Dorsolateral prefrontal cortex (tissue), 120 donors: ENCODE measurements at regions of chr12 and their contacts with region 1.

Region 1: DNA sequence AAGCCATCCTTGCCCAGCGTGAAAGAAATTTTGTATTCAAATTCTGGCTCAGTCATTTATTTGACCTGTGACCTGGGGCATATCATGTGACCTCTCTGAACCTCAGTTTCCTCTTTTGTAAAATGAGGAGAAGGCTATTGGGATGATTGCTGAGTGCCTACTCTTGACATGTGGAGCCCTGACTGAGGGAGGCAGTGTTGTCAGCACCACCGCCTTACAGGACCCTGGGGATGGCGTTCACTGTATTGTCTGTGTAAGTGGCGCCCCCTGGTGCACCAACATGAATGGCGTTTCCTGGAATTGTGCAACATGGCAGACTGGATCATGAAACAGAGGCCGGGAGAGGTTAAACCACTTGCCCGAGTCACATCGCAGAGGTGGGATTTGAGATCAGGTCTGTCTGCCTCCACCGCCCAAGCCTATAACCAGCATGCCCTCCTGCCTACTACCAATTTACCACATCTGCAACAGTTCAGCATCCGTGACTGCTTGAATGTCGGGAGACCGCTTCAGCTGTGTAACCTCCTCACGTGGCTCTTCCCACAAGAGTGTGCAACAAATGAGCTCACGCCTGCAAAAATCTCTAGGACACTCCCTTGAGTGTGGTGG is 20.1 kb upstream of the CCDC63 start:
- DNase-seq: peak; percentile 48 to 95 (median 86)
- H3K4me3 ChIP-seq: peak overlapping the region in 13 of 59 donors; percentile 4 to 40 (median 22)
- H3K27ac ChIP-seq: no peak overlapping the region
- H3K27me3 ChIP-seq: no peaks in the 10 kb centered on the region
- CTCF ChIP-seq: peak; percentile 58 to 95 (median 85)

Region 2: GRCh38 chr12:110449799-110450497 is 376.7 kb before region 1 on chr12 and contains the start of gene ARPC3:
- intact Hi-C with region 1: loop called (anchors 5 to 10 kb)
- DNase-seq: peak; percentile 89 to 95 (median 94)
- H3K4me3 ChIP-seq: peak within 1 kb of the TSS; percentile 60 to 97 (median 86)
- H3K27ac ChIP-seq: peak within 1 kb of the TSS; percentile 36 to 96 (median 89)
- H3K27me3 ChIP-seq: no peaks in the 10 kb centered on the region
- CTCF ChIP-seq: peak; percentile 67 to 96 (median 87)
- total RNA-seq, gene ARPC3: 78.9 to 178 (median 137) TPM

Region 3: DNA sequence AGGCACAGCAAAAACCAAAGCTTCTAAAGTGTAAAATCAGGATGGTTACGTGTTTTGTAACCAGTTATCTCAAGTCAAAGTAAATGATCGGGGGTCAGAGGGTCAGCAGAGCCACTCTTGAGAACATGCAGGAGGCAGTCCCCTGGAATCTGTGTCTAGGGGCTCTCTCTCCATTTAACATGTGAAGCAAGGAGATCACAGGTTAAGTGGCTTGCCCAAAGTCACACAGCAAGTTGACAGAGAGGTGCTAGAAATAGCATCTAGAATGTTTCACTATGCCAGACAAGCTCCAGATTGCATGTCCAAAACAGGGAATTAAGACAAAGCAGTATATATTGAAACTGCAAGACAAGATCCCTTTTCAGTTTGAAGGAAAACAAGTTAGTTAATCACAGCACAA is 277.0 kb before region 1 on chr12:
- intact Hi-C with region 1: loop called in 1 of 2 experiments (anchors 5 kb)
- DNase-seq: no peak
- H3K4me3 ChIP-seq: no peak overlapping the region
- H3K27ac ChIP-seq: peak overlapping the region in 4 of 59 donors; percentile 2 to 38 (median 27)
- H3K27me3 ChIP-seq: no peaks in the 10 kb centered on the region
- CTCF ChIP-seq: no peak

Region 4: DNA sequence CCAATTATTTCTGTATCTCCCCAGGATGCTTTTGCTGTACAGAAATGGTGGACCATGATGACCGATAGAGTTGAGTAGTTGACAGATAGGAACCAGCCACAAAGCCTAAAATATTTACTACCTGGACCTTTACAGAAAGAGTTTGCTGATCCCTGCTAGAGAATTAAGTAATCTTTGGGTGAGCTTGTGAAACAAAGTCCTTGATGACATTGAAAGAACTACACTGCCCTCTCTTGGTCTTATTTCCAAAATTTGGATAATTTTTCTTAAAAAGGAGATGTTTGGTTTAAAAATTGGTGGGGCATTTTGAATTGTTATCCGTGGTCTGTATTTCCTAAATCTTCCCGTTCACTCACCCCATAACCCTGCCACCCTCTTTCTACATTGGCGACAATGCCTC is 226.4 kb before region 1 on chr12:
- intact Hi-C with region 1: loop called (anchors 5 to 10 kb)
- DNase-seq: no peak
- H3K4me3 ChIP-seq: peak overlapping the region in 1 of 59 donors; percentile 7
- H3K27ac ChIP-seq: peak overlapping the region in 3 of 59 donors; percentile 14 to 37 (median 15)
- H3K27me3 ChIP-seq: no peaks in the 10 kb centered on the region
- CTCF ChIP-seq: peak; percentile 25 to 83 (median 62)

Region 5: DNA sequence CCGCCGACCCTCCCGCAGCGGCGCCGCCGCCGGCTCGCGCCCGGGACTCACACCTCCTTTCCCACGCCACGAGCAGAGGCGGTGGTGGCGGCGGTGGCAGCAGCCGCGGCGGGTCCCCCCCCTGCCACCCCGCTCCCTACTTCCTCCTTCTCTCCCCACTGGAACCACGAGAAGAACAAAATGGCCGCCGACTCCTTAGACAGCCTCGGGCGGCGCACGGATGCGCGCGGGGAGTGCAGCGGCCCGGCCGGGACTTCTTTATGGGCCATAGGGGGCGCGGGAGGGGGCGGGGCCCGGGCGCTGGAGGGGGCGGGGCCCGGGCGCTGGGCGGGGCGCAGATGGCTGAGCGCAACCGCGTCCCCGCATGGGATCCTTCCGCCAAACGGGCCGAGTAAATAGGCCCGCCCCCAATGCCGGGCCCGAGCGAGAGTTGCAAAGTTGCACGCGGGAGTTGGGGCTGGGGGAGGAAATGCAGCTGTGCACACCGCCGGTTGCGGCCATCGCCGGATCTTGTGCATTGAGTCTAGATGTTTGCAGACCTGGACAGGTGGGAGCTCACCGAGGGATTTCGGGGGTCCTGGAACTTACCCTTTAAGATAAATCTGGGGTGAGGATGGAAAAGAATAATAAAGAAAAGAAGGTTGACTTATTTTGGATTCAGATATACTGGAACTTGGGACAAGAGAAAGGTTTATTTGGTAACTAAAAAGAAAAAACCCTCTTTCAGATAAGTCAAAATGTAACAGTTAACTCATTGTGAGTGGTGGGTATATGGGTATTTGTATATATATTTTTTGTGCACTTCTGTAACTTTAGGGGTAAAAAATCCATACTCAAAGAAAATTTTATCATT is 83.8 kb before region 1 on chr12 and contains the start of gene PPP1CC:
- intact Hi-C with region 1: loop called (anchors 5 to 10 kb)
- DNase-seq: peak; percentile 80 to 95 (median 92)
- H3K4me3 ChIP-seq: peak within 1 kb of the TSS; percentile 73 to 99 (median 96)
- H3K27ac ChIP-seq: peak within 1 kb of the TSS; percentile 52 to 97 (median 91)
- H3K27me3 ChIP-seq: no peaks in the 10 kb centered on the region
- CTCF ChIP-seq: peak in 37 of 56 donors; percentile 7 to 45 (median 23)
- total RNA-seq, gene PPP1CC: 59.0 to 118 (median 84.9) TPM

Region 6: DNA sequence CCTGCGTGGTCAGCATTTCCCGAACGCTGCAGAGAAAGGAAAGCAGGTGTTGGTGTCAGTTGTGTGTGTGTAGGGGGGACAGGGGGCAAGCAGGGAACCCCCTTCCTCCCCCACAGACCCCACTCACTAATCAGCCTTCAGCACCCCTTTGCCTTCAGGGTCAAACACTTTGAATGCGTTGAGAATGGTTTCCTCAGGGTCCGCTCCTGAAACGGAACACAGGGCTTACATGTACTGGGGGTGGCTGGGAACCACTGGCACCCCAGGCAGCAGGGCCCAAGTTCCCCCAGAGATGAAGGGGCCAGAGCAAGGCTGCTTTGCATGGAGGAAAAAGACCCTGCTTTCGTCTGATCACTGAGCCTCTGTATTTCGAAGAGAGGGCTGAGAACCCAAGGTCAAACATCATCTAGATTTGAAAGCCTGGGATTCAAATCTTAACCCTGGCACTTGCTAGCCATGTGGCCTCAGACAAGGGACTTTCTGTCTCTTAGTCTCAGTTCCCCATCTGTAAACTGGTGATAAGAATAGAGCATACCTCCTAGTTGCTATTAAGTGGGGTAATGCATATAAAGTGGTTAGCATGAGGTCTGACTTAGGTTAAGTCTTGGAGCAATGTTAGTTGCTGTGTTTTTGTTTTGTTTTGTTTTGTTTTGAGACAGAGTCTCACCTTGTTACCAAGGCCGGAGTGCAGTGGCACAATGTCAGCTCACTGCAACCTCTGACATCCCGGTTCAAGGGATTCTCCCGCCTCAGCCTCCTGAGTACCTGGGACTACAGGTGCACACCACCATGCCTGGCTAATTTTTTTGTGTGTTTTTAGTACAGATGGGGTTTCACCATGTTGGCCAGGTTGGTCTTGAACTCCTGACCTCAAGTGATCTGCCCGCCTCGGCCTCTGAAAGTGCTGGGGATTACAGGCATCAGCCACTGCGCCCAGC is 86.7 kb after region 1 on chr12:
- intact Hi-C with region 1: no loop called
- DNase-seq: no peak
- H3K4me3 ChIP-seq: no peak overlapping the region
- H3K27ac ChIP-seq: no peak overlapping the region
- H3K27me3 ChIP-seq: peaks cover 0 to 5% (median 0%) of the 10 kb centered on the region in 45 donors
- CTCF ChIP-seq: no peak